ENCODE measurements at regions of chr9 and their contacts with region 1.

Region 1: GRCh38 chr9:84697509-84698114 is 28.1 kb downstream of the NTRK2 start:
- DNase-seq: peak in 1 of 2 experiments; percentile 27
- H3K4me3 ChIP-seq: no peak overlapping the region
- H3K27ac ChIP-seq: no peak overlapping the region
- H3K4me1 ChIP-seq: no peaks in the 10 kb centered on the region
- H3K27me3 ChIP-seq: peaks cover 4% of the 10 kb centered on the region; the same call in 1 of the 2 replicates
- CTCF ChIP-seq: peak; percentile 65

Region 2: DNA sequence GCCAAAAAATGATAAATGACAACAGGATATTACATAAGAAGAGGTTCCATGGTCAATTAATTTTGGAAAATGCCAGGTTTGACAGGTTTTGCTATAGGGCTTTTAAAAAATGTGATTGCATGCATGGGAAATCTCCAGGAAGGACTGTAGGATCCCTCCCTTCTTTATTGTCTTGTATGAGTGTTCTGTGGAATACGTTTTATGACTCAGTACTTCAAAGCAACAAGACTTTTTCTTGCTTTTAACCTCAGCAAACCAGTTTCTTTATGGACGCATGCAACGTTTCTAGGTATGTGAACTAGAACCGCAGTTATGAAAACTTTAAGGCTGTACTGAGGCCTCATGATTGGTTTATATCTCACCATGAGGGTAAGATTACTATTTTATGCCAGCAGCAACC is 104.7 kb before region 1 on chr9:
- CTCF ChIA-PET with region 1: no interaction called
- POLR2A ChIA-PET with region 1: no interaction called
- intact Hi-C with region 1: no loop called
- DNase-seq: no peak
- H3K4me3 ChIP-seq: no peak overlapping the region
- H3K27ac ChIP-seq: no peak overlapping the region
- H3K4me1 ChIP-seq: no peaks in the 10 kb centered on the region
- H3K27me3 ChIP-seq: no peaks in the 10 kb centered on the region
- CTCF ChIP-seq: no peak

Region 3: DNA sequence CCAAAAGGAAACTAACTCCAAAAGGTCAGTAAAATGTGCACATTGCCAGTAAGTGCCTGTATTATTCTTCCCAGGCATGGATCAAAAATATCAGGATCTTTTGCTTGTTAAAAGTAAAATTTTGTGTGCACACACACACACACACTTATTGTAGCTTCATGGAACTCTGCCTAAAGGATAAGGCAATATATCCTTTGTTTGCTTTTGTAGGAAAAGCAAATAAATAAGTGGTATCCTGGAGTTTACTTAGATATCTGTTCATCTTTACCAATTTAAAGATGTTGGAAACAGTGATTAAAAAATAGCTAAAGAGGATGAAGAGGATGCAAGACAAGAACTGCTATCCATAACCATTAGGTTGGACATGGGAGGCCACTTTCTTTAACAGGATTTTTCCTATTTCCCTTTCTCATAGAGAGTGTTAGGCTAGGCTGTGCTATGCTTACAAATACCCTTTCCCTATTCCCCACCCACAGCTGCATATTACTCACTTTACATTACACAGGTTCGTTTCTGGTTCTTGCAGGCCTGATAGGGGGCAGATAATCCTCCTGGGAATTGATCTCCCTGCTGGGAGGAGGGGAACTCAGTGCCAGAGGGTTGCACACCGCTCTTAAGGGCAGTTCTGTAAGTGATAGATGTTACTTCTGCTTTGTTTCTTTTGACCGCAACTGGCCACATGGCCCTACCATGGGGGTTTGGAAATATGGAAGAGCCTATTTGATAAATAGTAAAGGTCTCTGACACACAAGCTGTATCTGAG is 82.2 kb before region 1 on chr9:
- CTCF ChIA-PET with region 1: interaction called, 13 read pairs
- POLR2A ChIA-PET with region 1: no interaction called
- intact Hi-C with region 1: no loop called
- DNase-seq: no peak
- H3K4me3 ChIP-seq: no peak overlapping the region
- H3K27ac ChIP-seq: no peak overlapping the region
- H3K4me1 ChIP-seq: no peaks in the 10 kb centered on the region
- H3K27me3 ChIP-seq: no peaks in the 10 kb centered on the region
- CTCF ChIP-seq: no peak

Region 4: GRCh38 chr9:84642553-84643141 is 55.0 kb before region 1 on chr9:
- CTCF ChIA-PET with region 1: no interaction called
- POLR2A ChIA-PET with region 1: no interaction called
- intact Hi-C with region 1: no loop called
- DNase-seq: no peak
- H3K4me3 ChIP-seq: no peak overlapping the region
- H3K27ac ChIP-seq: no peak overlapping the region
- H3K4me1 ChIP-seq: no peaks in the 10 kb centered on the region
- H3K27me3 ChIP-seq: no peaks in the 10 kb centered on the region
- CTCF ChIP-seq: no peak

Region 5: GRCh38 chr9:84953797-84954705 is 256.4 kb after region 1 on chr9:
- CTCF ChIA-PET with region 1: no interaction called
- POLR2A ChIA-PET with region 1: no interaction called
- intact Hi-C with region 1: loop called (anchors 1 kb)
- DNase-seq: peak in 1 of 2 experiments; percentile 52
- H3K4me3 ChIP-seq: no peak overlapping the region
- H3K27ac ChIP-seq: no peak overlapping the region
- H3K4me1 ChIP-seq: no peaks in the 10 kb centered on the region
- H3K27me3 ChIP-seq: peaks cover 5% of the 10 kb centered on the region; the same call in 1 of the 2 replicates
- CTCF ChIP-seq: peak; percentile 82